ENCODE measurements at regions of chr5 and their contacts with region 1.

Region 1: GRCh38 chr5:7412409-7412808 is 16.5 kb downstream of the ADCY2 start:
- DNase-seq: no peak
- H3K4me3 ChIP-seq: no peak overlapping the region
- H3K27ac ChIP-seq: no peak overlapping the region
- H3K4me1 ChIP-seq: no peaks in the 10 kb centered on the region
- H3K27me3 ChIP-seq: no peaks in the 10 kb centered on the region
- CTCF ChIP-seq: no peak
- POLR2A ChIP-seq: no peak

Region 2: GRCh38 chr5:7462758-7463157 is 50.3 kb after region 1 on chr5:
- CTCF ChIA-PET with region 1: no interaction called
- POLR2A ChIA-PET with region 1: no interaction called
- dilution Hi-C with region 1: no loop called
- intact Hi-C with region 1: loop called (anchors 2 kb)
- DNase-seq: no peak
- H3K4me3 ChIP-seq: no peak overlapping the region
- H3K27ac ChIP-seq: no peak overlapping the region
- H3K4me1 ChIP-seq: no peaks in the 10 kb centered on the region
- H3K27me3 ChIP-seq: no peaks in the 10 kb centered on the region
- CTCF ChIP-seq: no peak
- POLR2A ChIP-seq: no peak

Region 3: DNA sequence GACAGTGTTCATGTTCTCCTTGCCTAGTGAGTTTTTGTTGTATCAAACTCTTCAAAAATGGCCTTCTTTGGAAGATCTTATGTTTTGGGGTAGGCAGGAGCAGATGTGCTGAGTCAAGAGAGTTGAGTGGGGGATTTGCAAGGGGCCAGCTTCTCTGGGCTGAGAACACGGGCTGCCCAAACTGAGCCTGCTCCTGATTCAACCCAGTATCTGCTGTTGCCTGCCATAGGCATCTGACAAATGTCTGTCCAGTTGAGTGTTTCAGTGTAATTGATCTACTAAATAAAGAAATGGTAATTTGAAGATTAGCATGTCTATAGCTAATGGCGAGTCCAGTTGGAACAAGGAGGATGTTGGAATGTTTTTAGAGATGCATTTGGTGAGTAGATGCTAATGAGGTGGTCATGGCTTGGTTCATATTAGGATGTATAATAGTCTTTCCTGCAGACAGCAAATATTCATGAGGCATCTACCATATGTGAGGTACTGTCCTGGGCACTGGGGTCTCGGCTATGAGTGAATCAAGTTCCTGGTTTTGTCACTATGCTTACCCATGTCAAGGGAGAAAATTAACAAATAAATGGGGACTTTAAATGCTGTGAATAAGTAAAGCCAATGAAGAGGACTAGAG is 103.0 kb after region 1 on chr5:
- CTCF ChIA-PET with region 1: no interaction called
- POLR2A ChIA-PET with region 1: no interaction called
- dilution Hi-C with region 1: no loop called
- intact Hi-C with region 1: no loop called
- DNase-seq: no peak
- H3K4me3 ChIP-seq: no peak overlapping the region
- H3K27ac ChIP-seq: no peak overlapping the region
- H3K4me1 ChIP-seq: no peaks in the 10 kb centered on the region
- H3K27me3 ChIP-seq: no peaks in the 10 kb centered on the region
- CTCF ChIP-seq: no peak
- POLR2A ChIP-seq: no peak